Heart right ventricle (tissue), 16 donors: ENCODE measurements at regions of chr17 and their contacts with region 1.

Region 1: GRCh38 chr17:4852567-4853207 is 19.5 kb downstream of the MINK1 start:
- DNase-seq: no peak
- ATAC-seq: no peak
- H3K4me3 ChIP-seq: no peak overlapping the region
- H3K27ac ChIP-seq: no peak overlapping the region
- H3K4me1 ChIP-seq: peaks cover 0 to 62% (median 34%) of the 10 kb centered on the region in 9 donors
- H3K27me3 ChIP-seq: no peaks in the 10 kb centered on the region
- CTCF ChIP-seq: no peak

Region 2: GRCh38 chr17:4796553-4796921 is 56.1 kb before region 1 on chr17:
- intact Hi-C with region 1: no loop called
- DNase-seq: no peak
- ATAC-seq: peak; percentile 14 to 61 (median 43)
- H3K4me3 ChIP-seq: peak overlapping the region; percentile 53 to 91 (median 76)
- H3K27ac ChIP-seq: peak overlapping the region in 9 of 10 donors; percentile 57 to 92 (median 78)
- H3K4me1 ChIP-seq: peaks cover 0 to 17% (median 9%) of the 10 kb centered on the region in 9 donors
- H3K27me3 ChIP-seq: no peaks in the 10 kb centered on the region
- CTCF ChIP-seq: no peak

Region 3: GRCh38 chr17:4839965-4840892 is 12.5 kb before region 1 on chr17:
- intact Hi-C with region 1: loop called in 1 of 10 experiments (anchors 1 kb)
- DNase-seq: no peak
- ATAC-seq: no peak
- H3K4me3 ChIP-seq: no peak overlapping the region
- H3K27ac ChIP-seq: peak overlapping the region in 1 of 10 donors; percentile 34
- H3K4me1 ChIP-seq: peaks cover 8 to 84% (median 57%) of the 10 kb centered on the region in 9 donors
- H3K27me3 ChIP-seq: no peaks in the 10 kb centered on the region
- CTCF ChIP-seq: no peak

Region 4: GRCh38 chr17:4920351-4921048 is 67.8 kb after region 1 on chr17:
- intact Hi-C with region 1: no loop called
- DNase-seq: no peak
- ATAC-seq: peak in 1 of 8 donors; percentile 56
- H3K4me3 ChIP-seq: no peak overlapping the region
- H3K27ac ChIP-seq: no peak overlapping the region
- H3K4me1 ChIP-seq: peaks cover 0 to 11% (median 0%) of the 10 kb centered on the region in 9 donors
- H3K27me3 ChIP-seq: no peaks in the 10 kb centered on the region
- CTCF ChIP-seq: no peak